Activated CD4-positive, alpha-beta T cell treated with anti-CD3 and anti-CD28 coated beads for 36 hours (primary cell): ENCODE measurements at regions of chr10 and their contacts with region 1.

Region 1: GRCh38 chr10:113326160-113327111 is 226.4 kb upstream of the HABP2 start:
- DNase-seq: peak; percentile 71
- ATAC-seq: peak; percentile 95
- H3K4me3 Mint-ChIP-seq: no peak overlapping the region
- H3K27ac Mint-ChIP-seq: no peak overlapping the region
- H3K4me1 Mint-ChIP-seq: peaks cover 7% of the 10 kb centered on the region
- H3K27me3 Mint-ChIP-seq: peaks cover 10% of the 10 kb centered on the region

Region 2: DNA sequence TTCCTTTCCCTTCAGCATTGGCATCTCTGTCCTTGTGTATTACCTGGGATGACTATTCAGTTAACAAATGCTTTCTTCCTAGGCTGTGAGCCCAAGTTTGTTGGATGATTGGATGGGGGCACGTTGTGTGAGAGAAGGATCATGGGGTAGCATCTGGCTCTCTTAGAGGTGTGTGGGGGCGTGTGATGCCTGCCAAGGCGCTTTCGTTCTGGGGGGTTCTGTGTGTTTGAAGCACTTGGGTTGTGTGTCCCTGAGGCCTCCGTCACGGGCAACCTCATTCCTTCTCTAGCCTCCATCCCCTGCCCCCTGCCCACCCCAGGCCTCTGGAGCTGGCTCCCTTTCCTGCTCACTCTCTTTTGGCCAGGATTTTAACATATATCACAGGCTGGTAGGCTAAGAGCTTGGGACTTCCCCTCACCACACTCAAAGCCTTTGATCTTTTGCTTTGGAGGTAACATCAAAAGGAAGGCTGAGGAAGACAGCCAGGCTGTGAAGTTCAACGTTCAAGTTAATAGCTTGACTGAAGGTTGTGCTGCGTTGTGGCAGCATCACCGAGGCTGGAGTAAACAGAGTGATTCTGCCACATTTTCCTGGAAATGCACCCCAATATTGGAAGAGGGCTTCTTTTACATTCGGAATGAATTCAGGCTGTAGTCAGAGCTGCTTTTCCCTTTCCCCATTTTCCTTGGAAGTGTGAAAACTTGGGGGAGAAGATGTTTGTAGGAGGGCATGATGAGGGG is 319.2 kb before region 1 on chr10:
- CTCF ChIA-PET with region 1: no interaction called
- POLR2A ChIA-PET with region 1: no interaction called
- intact Hi-C with region 1: loop called in 1 of 2 experiments (anchors 5 kb)
- DNase-seq: peak; percentile 57
- ATAC-seq: peak; percentile 98
- H3K4me3 Mint-ChIP-seq: peak overlapping the region; percentile 49
- H3K27ac Mint-ChIP-seq: no peak overlapping the region
- H3K4me1 Mint-ChIP-seq: peaks cover 24% of the 10 kb centered on the region
- H3K27me3 Mint-ChIP-seq: peaks cover 74% of the 10 kb centered on the region

Region 3: GRCh38 chr10:113228530-113228929 is 97.9 kb before region 1 on chr10:
- CTCF ChIA-PET with region 1: no interaction called
- POLR2A ChIA-PET with region 1: no interaction called
- intact Hi-C with region 1: loop called in 1 of 2 experiments (anchors 1 kb)
- DNase-seq: no peak
- ATAC-seq: no peak
- H3K4me3 Mint-ChIP-seq: no peak overlapping the region
- H3K27ac Mint-ChIP-seq: no peak overlapping the region
- H3K4me1 Mint-ChIP-seq: peaks cover 21% of the 10 kb centered on the region
- H3K27me3 Mint-ChIP-seq: peaks cover 36% of the 10 kb centered on the region

Region 4: GRCh38 chr10:113399065-113399464 is 72.6 kb after region 1 on chr10:
- CTCF ChIA-PET with region 1: no interaction called
- POLR2A ChIA-PET with region 1: no interaction called
- intact Hi-C with region 1: no loop called
- DNase-seq: no peak
- ATAC-seq: no peak
- H3K4me3 Mint-ChIP-seq: no peak overlapping the region
- H3K27ac Mint-ChIP-seq: no peak overlapping the region
- H3K4me1 Mint-ChIP-seq: no peaks in the 10 kb centered on the region
- H3K27me3 Mint-ChIP-seq: peaks cover 4% of the 10 kb centered on the region

Region 5: GRCh38 chr10:113409175-113409574 is 82.7 kb after region 1 on chr10:
- CTCF ChIA-PET with region 1: no interaction called
- POLR2A ChIA-PET with region 1: no interaction called
- intact Hi-C with region 1: no loop called
- DNase-seq: no peak
- ATAC-seq: no peak
- H3K4me3 Mint-ChIP-seq: no peak overlapping the region
- H3K27ac Mint-ChIP-seq: no peak overlapping the region
- H3K4me1 Mint-ChIP-seq: no peaks in the 10 kb centered on the region
- H3K27me3 Mint-ChIP-seq: no peaks in the 10 kb centered on the region

Region 6: DNA sequence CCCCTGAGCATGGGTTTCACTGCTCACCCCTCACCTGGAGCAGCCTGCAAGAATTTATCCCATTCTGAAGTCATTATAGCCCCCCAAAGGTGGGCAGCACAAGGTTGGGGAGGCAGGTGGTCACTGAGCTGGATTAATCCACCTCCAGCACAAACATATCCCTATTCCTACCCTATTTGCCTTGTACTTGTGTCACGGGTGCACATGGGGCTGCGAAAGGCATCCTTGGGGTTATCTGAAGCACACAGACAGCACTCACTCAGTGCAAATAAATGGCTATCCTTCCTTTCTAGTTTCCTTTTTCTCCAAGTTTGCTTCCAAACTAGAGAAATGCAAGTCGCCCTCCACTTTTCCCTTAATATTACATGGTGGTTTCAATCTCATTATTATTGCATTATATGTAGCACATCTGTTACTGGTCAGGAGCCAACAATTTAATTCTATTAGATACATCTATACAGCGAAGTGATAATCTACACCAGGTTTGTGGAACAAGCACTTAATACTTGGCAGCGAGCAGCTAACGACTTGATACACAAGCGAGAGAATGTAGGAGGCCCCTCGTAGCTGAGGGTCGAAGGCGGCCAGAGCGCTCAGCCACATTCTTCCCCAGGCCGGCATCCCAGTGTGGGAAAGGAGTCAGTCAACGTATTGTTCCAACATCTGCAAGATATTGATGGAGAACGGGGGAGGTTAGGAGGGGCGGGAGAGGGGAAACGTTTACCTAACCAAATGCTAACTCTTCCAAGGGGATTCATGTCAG is 105.1 kb after region 1 on chr10:
- CTCF ChIA-PET with region 1: no interaction called
- POLR2A ChIA-PET with region 1: no interaction called
- intact Hi-C with region 1: no loop called
- DNase-seq: no peak
- ATAC-seq: no peak
- H3K4me3 Mint-ChIP-seq: no peak overlapping the region
- H3K27ac Mint-ChIP-seq: no peak overlapping the region
- H3K4me1 Mint-ChIP-seq: no peaks in the 10 kb centered on the region
- H3K27me3 Mint-ChIP-seq: peaks cover 9% of the 10 kb centered on the region